MCF 10A (cell line): ENCODE measurements at regions of chr1 and their contacts with region 1.

Region 1: GRCh38 chr1:153572569-153573015 is 6.9 kb upstream of the S100A2 start:
- DNase-seq: peak; percentile 94
- H3K4me3 Mint-ChIP-seq: no peak overlapping the region
- H3K27ac Mint-ChIP-seq: peak overlapping the region; percentile 67
- H3K4me1 Mint-ChIP-seq: peaks cover 33% of the 10 kb centered on the region
- H3K27me3 Mint-ChIP-seq: no peaks in the 10 kb centered on the region
- CTCF ChIP-seq: peak; percentile 98

Region 2: DNA sequence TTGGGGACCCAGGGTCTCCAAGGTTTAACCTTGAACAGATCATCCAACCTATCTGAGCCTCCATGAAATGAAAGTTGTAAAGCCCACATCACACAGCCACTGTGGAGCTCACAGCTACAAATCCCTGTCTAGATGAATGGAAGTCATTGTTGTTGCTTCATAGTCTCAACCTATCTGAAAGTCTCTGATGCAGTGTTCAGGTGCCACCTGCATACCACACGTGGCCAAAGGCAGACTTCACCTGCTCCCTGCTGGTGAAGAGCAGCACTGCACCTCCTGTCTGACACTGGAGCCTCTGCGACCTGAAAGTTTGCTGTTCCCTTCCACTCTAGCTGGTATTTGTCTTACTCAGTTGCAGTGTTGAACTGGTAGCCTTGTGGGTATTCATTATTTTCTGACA is 294.8 kb before region 1 on chr1:
- CTCF ChIA-PET with region 1: no interaction called
- POLR2A ChIA-PET with region 1: no interaction called
- intact Hi-C with region 1: no loop called
- DNase-seq: peak; percentile 64
- H3K4me3 Mint-ChIP-seq: no peak overlapping the region
- H3K27ac Mint-ChIP-seq: no peak overlapping the region
- H3K4me1 Mint-ChIP-seq: no peaks in the 10 kb centered on the region
- H3K27me3 Mint-ChIP-seq: peaks cover 31% of the 10 kb centered on the region
- CTCF ChIP-seq: peak; percentile 87

Region 3: GRCh38 chr1:153459655-153460054 is 112.9 kb before region 1 on chr1:
- CTCF ChIA-PET with region 1: no interaction called
- POLR2A ChIA-PET with region 1: no interaction called
- intact Hi-C with region 1: no loop called
- DNase-seq: no peak
- H3K4me3 Mint-ChIP-seq: no peak overlapping the region
- H3K27ac Mint-ChIP-seq: no peak overlapping the region
- H3K4me1 Mint-ChIP-seq: no peaks in the 10 kb centered on the region
- H3K27me3 Mint-ChIP-seq: peaks cover 85% of the 10 kb centered on the region
- CTCF ChIP-seq: no peak

Region 4: GRCh38 chr1:153520230-153520629 is 52.4 kb before region 1 on chr1:
- CTCF ChIA-PET with region 1: interaction called, 379 read pairs
- POLR2A ChIA-PET with region 1: interaction called, 476 read pairs
- intact Hi-C with region 1: no loop called
- DNase-seq: no peak
- H3K4me3 Mint-ChIP-seq: no peak overlapping the region
- H3K27ac Mint-ChIP-seq: peak overlapping the region; percentile 37
- H3K4me1 Mint-ChIP-seq: peaks cover 28% of the 10 kb centered on the region
- H3K27me3 Mint-ChIP-seq: no peaks in the 10 kb centered on the region
- CTCF ChIP-seq: no peak

Region 5: DNA sequence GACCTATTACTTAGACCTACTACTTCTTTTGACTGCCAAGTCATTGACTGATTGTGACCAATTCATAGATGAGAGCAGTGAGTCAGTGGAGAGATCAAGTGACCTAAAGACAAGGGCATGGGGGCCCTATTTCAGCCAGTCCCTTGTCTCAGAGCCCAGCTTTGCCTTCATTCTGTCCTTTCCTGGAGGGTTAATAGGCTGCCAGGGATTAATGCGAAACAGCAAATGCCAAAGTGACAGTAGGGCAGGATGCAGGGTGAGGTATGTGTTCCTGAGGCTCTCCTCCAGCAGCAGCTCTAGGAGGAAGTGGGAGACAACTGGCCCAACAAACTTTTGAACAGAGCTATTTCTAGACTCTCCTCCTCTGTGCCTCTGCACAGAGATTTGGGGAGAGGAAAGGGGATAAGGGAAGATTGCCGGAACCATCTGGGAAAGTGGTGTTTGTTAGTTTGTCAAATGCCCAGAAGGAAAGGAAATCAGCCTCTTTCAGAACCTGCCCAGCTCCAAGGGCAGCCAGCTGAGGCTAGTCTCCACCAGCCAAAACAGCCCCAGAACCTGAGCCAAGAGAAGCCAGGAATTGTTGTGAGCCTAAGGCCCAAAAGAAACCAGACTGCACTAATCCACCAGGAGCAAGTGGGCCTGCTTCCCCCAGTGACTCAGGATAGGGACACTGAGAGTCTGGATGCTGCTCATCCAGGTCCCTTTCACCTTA is 18.6 kb before region 1 on chr1:
- CTCF ChIA-PET with region 1: interaction called, 15 read pairs
- POLR2A ChIA-PET with region 1: interaction called, 41 read pairs
- intact Hi-C with region 1: no loop called
- DNase-seq: no peak
- H3K4me3 Mint-ChIP-seq: no peak overlapping the region
- H3K27ac Mint-ChIP-seq: peak overlapping the region; percentile 17
- H3K4me1 Mint-ChIP-seq: peaks cover 27% of the 10 kb centered on the region
- H3K27me3 Mint-ChIP-seq: no peaks in the 10 kb centered on the region
- CTCF ChIP-seq: no peak

Region 6: GRCh38 chr1:153598309-153599172 is 25.9 kb after region 1 on chr1:
- CTCF ChIA-PET with region 1: interaction called, 19 read pairs
- POLR2A ChIA-PET with region 1: interaction called, 10 read pairs
- intact Hi-C with region 1: no loop called
- DNase-seq: no peak
- H3K4me3 Mint-ChIP-seq: no peak overlapping the region
- H3K27ac Mint-ChIP-seq: peak overlapping the region; percentile 14
- H3K4me1 Mint-ChIP-seq: peaks cover 12% of the 10 kb centered on the region
- H3K27me3 Mint-ChIP-seq: no peaks in the 10 kb centered on the region
- CTCF ChIP-seq: no peak

Region 7: GRCh38 chr1:153633716-153634665 is 61.4 kb after region 1 on chr1 and contains the start of gene CHTOP:
- CTCF ChIA-PET with region 1: interaction called, 66 read pairs
- POLR2A ChIA-PET with region 1: interaction called, 84 read pairs
- intact Hi-C with region 1: no loop called
- DNase-seq: peak; percentile 99
- H3K4me3 Mint-ChIP-seq: peak within 1 kb of the TSS; percentile 97
- H3K27ac Mint-ChIP-seq: peak within 1 kb of the TSS; percentile 100
- H3K4me1 Mint-ChIP-seq: peaks cover 32% of the 10 kb centered on the region
- H3K27me3 Mint-ChIP-seq: no peaks in the 10 kb centered on the region
- CTCF ChIP-seq: no peak
- total RNA-seq, gene CHTOP: 147 and 156 TPM in 2 replicates

Region 8: DNA sequence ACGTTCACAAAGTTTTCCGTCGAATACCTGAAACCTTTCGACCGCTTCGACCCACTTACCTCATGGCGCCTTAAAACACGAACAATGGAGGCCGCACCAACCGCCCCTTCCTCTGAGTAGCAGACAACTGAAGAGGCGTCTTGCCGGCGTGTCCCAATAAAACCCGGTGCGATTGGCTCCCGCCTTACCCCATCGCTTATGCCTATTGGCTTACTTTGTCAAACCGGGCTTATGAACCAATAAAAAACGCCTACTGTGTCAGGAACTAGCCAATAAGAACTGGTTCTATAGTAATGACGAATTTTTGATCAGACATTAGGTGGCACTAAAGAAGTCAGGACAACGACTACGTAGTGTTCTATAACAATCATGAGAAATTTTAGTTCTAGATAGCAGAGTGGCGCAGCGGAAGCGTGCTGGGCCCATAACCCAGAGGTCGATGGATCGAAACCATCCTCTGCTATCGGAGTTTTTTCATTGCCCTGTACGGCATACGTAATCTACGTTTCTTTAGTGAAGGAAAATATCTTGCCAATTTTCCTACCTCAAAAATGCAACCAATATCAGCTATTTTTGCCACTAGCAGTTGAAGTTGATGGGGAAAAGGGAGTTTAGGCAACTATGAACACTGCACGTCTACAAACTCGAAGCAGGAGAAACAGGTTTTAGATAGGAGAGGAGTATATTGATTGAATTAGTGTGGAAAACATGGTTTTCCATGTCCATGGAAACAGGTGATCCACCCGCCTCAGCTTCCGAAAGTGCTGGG is 98.5 kb after region 1 on chr1 and contains the start of gene ILF2:
- CTCF ChIA-PET with region 1: interaction called, 29 read pairs
- POLR2A ChIA-PET with region 1: interaction called, 27 read pairs
- intact Hi-C with region 1: loop called (anchors 1 kb)
- DNase-seq: peak; percentile 100
- H3K4me3 Mint-ChIP-seq: no peak within 1 kb of the TSS
- H3K27ac Mint-ChIP-seq: no peak within 1 kb of the TSS
- H3K4me1 Mint-ChIP-seq: peaks cover 5% of the 10 kb centered on the region
- H3K27me3 Mint-ChIP-seq: no peaks in the 10 kb centered on the region
- CTCF ChIP-seq: peak; percentile 27
- total RNA-seq, gene ILF2: 348 and 374 TPM in 2 replicates